Dorsolateral prefrontal cortex (tissue), 120 donors: ENCODE measurements at regions of chr2 and their contacts with region 1.

Region 1: GRCh38 chr2:11344342-11344955 is at the start of gene ROCK2:
- DNase-seq: peak; percentile 63 to 88 (median 81)
- H3K4me3 ChIP-seq: peak within 1 kb of the TSS; percentile 76 to 100 (median 93)
- H3K27ac ChIP-seq: peak within 1 kb of the TSS; percentile 86 to 99 (median 97)
- H3K27me3 ChIP-seq: no peaks in the 10 kb centered on the region
- CTCF ChIP-seq: peak in 1 of 56 donors; percentile 6
- total RNA-seq, gene ROCK2: 42.2 to 120 (median 82.5) TPM

Region 2: GRCh38 chr2:10812362-10813162 is 531.9 kb before region 1 on chr2 and contains the start of gene PDIA6:
- intact Hi-C with region 1: loop called in 1 of 2 experiments (anchors 10 kb)
- DNase-seq: peak; percentile 89 to 98 (median 96)
- H3K4me3 ChIP-seq: peak within 1 kb of the TSS; percentile 57 to 97 (median 85)
- H3K27ac ChIP-seq: peak within 1 kb of the TSS in 55 of 59 donors; percentile 55 to 96 (median 86)
- H3K27me3 ChIP-seq: no peaks in the 10 kb centered on the region
- CTCF ChIP-seq: peak in 27 of 56 donors; percentile 2 to 63 (median 23)
- total RNA-seq, gene PDIA6: 40.2 to 108 (median 58.6) TPM

Region 3: DNA sequence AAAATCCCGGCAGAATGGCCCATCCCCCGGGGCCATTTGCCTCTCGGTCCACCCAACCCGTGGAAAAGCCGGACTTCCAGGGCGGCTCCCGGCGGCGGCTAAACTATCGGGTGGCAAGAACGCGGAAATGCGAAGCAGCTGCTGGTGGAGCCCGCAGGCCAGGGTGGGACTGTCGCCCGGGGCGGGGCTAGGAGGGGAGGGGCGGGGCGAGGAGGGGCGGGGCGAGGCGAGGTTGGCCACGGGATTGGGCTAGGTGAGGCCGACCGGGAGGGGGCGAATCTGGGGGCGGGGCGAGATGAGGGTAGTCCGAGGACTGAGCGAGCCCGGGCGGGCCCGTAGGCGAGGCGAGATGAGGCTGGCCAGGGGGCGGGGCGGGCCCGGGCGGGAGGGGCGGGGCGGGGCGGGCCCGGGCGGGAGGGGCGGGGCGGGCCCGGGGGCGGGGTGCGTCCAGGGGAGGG is 189.5 kb before region 1 on chr2:
- intact Hi-C with region 1: loop called (anchors 2 kb)
- DNase-seq: peak; percentile 88 to 96 (median 93)
- H3K4me3 ChIP-seq: peak overlapping the region; percentile 19 to 99 (median 88)
- H3K27ac ChIP-seq: peak overlapping the region in 56 of 59 donors; percentile 22 to 94 (median 85)
- H3K27me3 ChIP-seq: no peaks in the 10 kb centered on the region
- CTCF ChIP-seq: no peak

Region 4: GRCh38 chr2:11411768-11412448 is 67.5 kb after region 1 on chr2:
- intact Hi-C with region 1: loop called in 1 of 2 experiments (anchors 5 kb)
- DNase-seq: peak in 4 of 10 donors; percentile 32 to 64 (median 52)
- H3K4me3 ChIP-seq: peak overlapping the region in 55 of 59 donors; percentile 1 to 62 (median 39)
- H3K27ac ChIP-seq: peak overlapping the region in 1 of 59 donors; percentile 36
- H3K27me3 ChIP-seq: no peaks in the 10 kb centered on the region
- CTCF ChIP-seq: peak; percentile 64 to 93 (median 83)